ENCODE measurements at regions of chr1 and their contacts with region 1.

Region 1: GRCh38 chr1:150696590-150697524 is at the start of gene GOLPH3L:
- DNase-seq: peak; percentile 97
- H3K4me3 ChIP-seq: peak within 1 kb of the TSS; percentile 66 to 75 (median 69)
- H3K27ac ChIP-seq: peak within 1 kb of the TSS; percentile 69 to 81 (median 78)
- H3K4me1 ChIP-seq: peaks cover 14 to 37% (median 34%) of the 10 kb centered on the region in 4 donors
- H3K27me3 ChIP-seq: no peaks in the 10 kb centered on the region
- CTCF ChIP-seq: peak in 1 of 3 experiments; percentile 29
- EP300 ChIP-seq: no peak
- POLR2A ChIP-seq: no peak
- total RNA-seq, gene GOLPH3L: 16.2 to 23.9 (median 21.6) TPM

Region 2: GRCh38 chr1:151008190-151008860 is 311.5 kb after region 1 on chr1 and contains the start of gene PRUNE1:
- intact Hi-C with region 1: loop called (anchors 10 kb)
- DNase-seq: peak; percentile 98
- H3K4me3 ChIP-seq: peak within 1 kb of the TSS; percentile 66 to 80 (median 70)
- H3K27ac ChIP-seq: peak within 1 kb of the TSS; percentile 81 to 91 (median 87)
- H3K4me1 ChIP-seq: peaks cover 54 to 79% (median 77%) of the 10 kb centered on the region in 4 donors
- H3K27me3 ChIP-seq: no peaks in the 10 kb centered on the region
- CTCF ChIP-seq: peak in 1 of 3 experiments; percentile 10
- EP300 ChIP-seq: no peak
- POLR2A ChIP-seq: no peak
- total RNA-seq, gene PRUNE1: 17.4 to 40.7 (median 23.1) TPM

Measured in esophagus muscularis mucosa (tissue), 4 donors.